GM10248 (cell line): ENCODE measurements at regions of chr3 and their contacts with region 1.

Region 1: GRCh38 chr3:168127466-168127865 is 31.7 kb upstream of the GOLIM4 start:
- DNase-seq: no peak
- CTCF ChIP-seq: no peak

Region 2: GRCh38 chr3:168141405-168141998 is 14.0 kb after region 1 on chr3:
- CTCF ChIA-PET with region 1: interaction called, 10 read pairs
- POLR2A ChIA-PET with region 1: no interaction called
- DNase-seq: no peak
- CTCF ChIP-seq: no peak